Panc1 (cell line): ENCODE measurements at regions of chr1 and their contacts with region 1.

Region 1: DNA sequence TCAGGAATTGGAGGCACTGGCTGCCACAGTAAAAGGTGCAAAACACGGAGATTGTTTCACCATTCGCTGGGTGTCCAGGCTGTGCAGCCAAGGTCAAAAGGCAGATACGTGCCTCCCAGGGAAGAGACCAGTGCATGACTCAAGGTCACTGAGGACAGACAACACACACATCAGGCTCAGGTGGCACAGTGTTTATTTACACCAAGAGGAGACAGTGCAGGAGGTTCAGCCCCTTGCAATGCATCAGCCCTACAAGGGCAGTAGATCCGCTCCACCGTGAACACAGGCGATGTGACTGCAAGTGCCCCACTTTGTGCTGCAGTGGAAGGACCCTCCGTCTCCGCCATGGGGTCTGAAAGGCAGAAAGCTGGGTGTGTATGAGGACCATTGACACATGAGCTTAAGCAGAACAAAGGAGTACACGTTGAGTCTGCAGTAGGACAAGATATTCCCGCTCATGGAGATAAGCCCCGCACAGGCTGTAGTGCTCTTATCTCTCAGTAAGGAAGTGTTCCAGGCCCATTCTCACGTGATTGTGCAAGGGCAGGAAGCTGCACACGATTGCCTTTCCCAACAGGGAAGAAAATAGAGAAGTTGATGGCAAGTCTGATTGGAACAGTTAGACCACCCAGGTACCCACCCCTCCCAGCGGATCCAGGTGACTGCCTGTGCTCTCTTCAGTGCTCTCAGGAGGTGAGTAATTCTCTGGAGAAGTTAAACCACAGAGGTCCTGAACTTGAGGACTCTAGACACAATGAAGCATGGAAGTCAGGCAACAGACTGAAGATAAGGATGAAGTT is 37.5 kb upstream of the QSOX1 start:
- DNase-seq: no peak
- ATAC-seq: peak; percentile 57
- H3K4me3 ChIP-seq: no peak overlapping the region
- H3K27ac ChIP-seq: no peak overlapping the region
- H3K4me1 ChIP-seq: 0 out of 2 replicates have a peak, but pooled peaks cover 3% of the 10 kb centered on the region
- H3K27me3 ChIP-seq: no peaks in the 10 kb centered on the region
- CTCF ChIP-seq: no peak

Region 2: DNA sequence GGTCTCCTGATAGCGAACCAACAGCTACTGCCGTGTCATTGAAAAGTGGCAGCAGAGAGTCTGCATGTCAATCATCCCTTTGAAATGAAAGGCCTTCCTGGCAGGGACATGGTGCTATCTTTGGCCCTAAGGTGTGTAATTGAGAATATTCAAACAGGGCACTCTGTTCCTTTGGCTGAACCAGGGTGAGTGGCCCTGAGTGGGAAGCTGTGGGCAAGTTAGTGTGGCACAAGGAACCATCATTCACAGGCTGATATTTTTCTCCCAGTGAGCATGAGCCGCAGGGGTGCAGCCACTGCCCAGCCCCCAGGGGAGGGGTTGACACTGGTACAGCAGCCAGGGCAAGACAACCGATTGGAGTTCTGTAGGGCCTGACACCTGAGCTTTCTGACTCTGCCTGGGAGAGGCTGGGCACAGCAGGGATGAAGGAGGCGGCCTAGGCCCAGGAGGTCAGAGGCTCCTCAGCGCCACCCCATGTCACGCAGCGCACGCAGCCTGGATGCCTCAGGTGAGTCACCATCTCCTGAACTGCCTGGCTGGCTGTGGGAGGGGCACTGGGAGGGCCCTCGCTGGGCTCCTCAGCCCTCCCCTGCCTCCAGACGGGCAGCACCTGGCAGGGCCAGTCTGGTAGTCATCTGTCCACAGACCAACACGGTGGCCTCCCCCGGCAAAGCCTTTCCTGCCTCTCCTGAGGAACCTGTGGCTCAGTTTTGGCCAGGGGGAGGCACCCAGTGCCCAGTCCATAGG is 50.7 kb after region 1 on chr1:
- CTCF ChIA-PET with region 1: interaction called, 11 read pairs
- POLR2A ChIA-PET with region 1: no interaction called
- in situ Hi-C with region 1: no loop called
- intact Hi-C with region 1: no loop called
- DNase-seq: no peak
- ATAC-seq: peak; percentile 70
- H3K4me3 ChIP-seq: no peak overlapping the region
- H3K27ac ChIP-seq: no peak overlapping the region
- H3K4me1 ChIP-seq: peaks cover 4% of the 10 kb centered on the region; the same call in 1 of the 2 replicates
- H3K27me3 ChIP-seq: no peaks in the 10 kb centered on the region
- CTCF ChIP-seq: no peak